ENCODE measurements at regions of chrX and their contacts with region 1.

Region 1: DNA sequence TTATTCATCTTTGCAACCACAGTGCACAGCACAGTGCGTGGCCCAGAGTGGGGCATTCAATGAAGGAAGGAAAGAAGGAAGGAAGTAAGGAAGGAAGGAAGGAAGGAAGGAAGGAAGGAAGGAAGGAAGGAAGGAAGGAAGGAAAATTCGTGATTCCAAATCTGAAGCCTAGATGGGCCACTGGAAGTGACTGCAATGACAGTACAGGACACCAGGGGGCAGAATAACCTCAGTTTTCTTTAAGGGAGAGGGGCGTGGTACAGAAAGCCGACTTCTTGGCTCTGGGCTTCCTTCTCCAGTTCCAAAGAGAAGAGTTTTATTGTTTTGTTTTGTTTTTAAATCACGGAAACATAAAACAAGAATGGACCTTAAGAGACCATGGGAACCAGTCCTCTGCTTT is 47.8 kb downstream of the APLN start:
- DNase-seq: peak; percentile 23
- ATAC-seq: 0 out of 2 replicates have a peak, but pooled peaks have one; percentile 32
- H3K4me3 ChIP-seq: no peak overlapping the region
- H3K27ac ChIP-seq: no peak overlapping the region
- H3K4me1 ChIP-seq: peaks cover 10 to 15% of the 10 kb centered on the region in 2 experiments; a peak in 2 of 4 replicates
- H3K27me3 ChIP-seq: no peaks in the 10 kb centered on the region
- CTCF ChIP-seq: peak; percentile 60 to 61 (median 60); a peak in 5 of 6 replicates
- POLR2A ChIP-seq: no peak
- RAD21 ChIP-seq: peak; percentile 78

Region 2: GRCh38 chrX:129360175-129360574 is 246.7 kb before region 1 on chrX:
- CTCF ChIA-PET with region 1: no interaction called
- POLR2A ChIA-PET with region 1: no interaction called
- RAD21 ChIA-PET with region 1: no interaction called
- intact Hi-C with region 1: no loop called
- DNase-seq: peak; percentile 33
- ATAC-seq: peak; percentile 82
- H3K4me3 ChIP-seq: no peak overlapping the region
- H3K27ac ChIP-seq: no peak overlapping the region
- H3K4me1 ChIP-seq: no peaks in the 10 kb centered on the region
- H3K27me3 ChIP-seq: no peaks in the 10 kb centered on the region
- CTCF ChIP-seq: peak; percentile 31 to 61 (median 36); a peak in 5 of 6 replicates
- POLR2A ChIP-seq: no peak
- RAD21 ChIP-seq: peak; percentile 63

Region 3: GRCh38 chrX:129726307-129727111 is 119.6 kb after region 1 on chrX:
- CTCF ChIA-PET with region 1: interaction called, 27 read pairs
- POLR2A ChIA-PET with region 1: no interaction called
- RAD21 ChIA-PET with region 1: interaction called in 1 of 2 experiments, 4 read pairs
- intact Hi-C with region 1: loop called (anchors 1 kb)
- DNase-seq: peak; percentile 28
- ATAC-seq: peak; percentile 91
- H3K4me3 ChIP-seq: no peak overlapping the region
- H3K27ac ChIP-seq: no peak overlapping the region
- H3K4me1 ChIP-seq: no peaks in the 10 kb centered on the region
- H3K27me3 ChIP-seq: no peaks in the 10 kb centered on the region
- CTCF ChIP-seq: peak; percentile 59 to 78 (median 65); a peak in 5 of 6 replicates
- POLR2A ChIP-seq: no peak
- RAD21 ChIP-seq: peak; percentile 86

Region 4: DNA sequence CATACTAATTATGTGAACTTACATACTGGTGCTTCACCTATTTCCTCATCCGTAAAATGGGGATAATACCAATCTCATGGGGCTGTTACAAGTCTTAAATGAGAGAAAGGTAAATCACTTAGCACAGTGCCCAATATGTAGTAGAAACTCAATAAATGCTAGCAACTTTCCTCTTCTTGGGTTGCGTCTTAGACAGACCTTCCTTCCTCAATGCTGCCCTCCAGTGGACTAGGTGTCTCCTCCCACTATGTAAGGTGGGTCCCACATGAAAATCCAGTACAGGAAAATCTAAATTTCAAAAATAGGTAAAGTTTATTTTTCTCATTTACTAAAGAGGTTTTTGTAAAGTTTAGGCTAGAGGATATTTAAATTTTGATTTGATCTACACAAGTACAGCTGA is 216.2 kb after region 1 on chrX:
- CTCF ChIA-PET with region 1: no interaction called
- POLR2A ChIA-PET with region 1: no interaction called
- RAD21 ChIA-PET with region 1: no interaction called
- intact Hi-C with region 1: loop called (anchors 2 kb)
- DNase-seq: no peak
- ATAC-seq: peak; percentile 78
- H3K4me3 ChIP-seq: no peak overlapping the region
- H3K27ac ChIP-seq: no peak overlapping the region
- H3K4me1 ChIP-seq: no peaks in the 10 kb centered on the region
- H3K27me3 ChIP-seq: no peaks in the 10 kb centered on the region
- CTCF ChIP-seq: peak; percentile 27 to 54 (median 53); a peak in 5 of 6 replicates
- POLR2A ChIP-seq: no peak
- RAD21 ChIP-seq: peak; percentile 30; the same call in 1 of the 2 replicates

Region 5: GRCh38 chrX:129905787-129906580 is 299.1 kb after region 1 on chrX and contains the start of gene UTP14A:
- CTCF ChIA-PET with region 1: no interaction called
- POLR2A ChIA-PET with region 1: no interaction called
- RAD21 ChIA-PET with region 1: no interaction called
- intact Hi-C with region 1: loop called (anchors 5 kb)
- DNase-seq: peak; percentile 86
- ATAC-seq: peak; percentile 92
- H3K4me3 ChIP-seq: peak within 1 kb of the TSS; percentile 77 to 78
- H3K27ac ChIP-seq: peak within 1 kb of the TSS; percentile 70
- H3K4me1 ChIP-seq: peaks cover 7 to 25% of the 10 kb centered on the region in 2 experiments; a peak in 3 of 4 replicates
- H3K27me3 ChIP-seq: no peaks in the 10 kb centered on the region
- CTCF ChIP-seq: no peak
- POLR2A ChIP-seq: peak; percentile 46
- RAD21 ChIP-seq: no peak
- total RNA-seq, gene UTP14A: 28.3 TPM

Region 6: GRCh38 chrX:130060122-130061069 is 453.5 kb after region 1 on chrX:
- CTCF ChIA-PET with region 1: interaction called, 8 read pairs
- POLR2A ChIA-PET with region 1: no interaction called
- RAD21 ChIA-PET with region 1: no interaction called
- intact Hi-C with region 1: loop called (anchors 5 kb)
- DNase-seq: peak; percentile 12
- ATAC-seq: peak; percentile 91
- H3K4me3 ChIP-seq: peak overlapping the region in 1 of 2 experiments; percentile 23; a peak in 2 of 4 replicates
- H3K27ac ChIP-seq: no peak overlapping the region; the same call in 1 of the 2 replicates
- H3K4me1 ChIP-seq: peaks cover 2 to 9% of the 10 kb centered on the region in 2 experiments; a peak in 3 of 4 replicates
- H3K27me3 ChIP-seq: no peaks in the 10 kb centered on the region
- CTCF ChIP-seq: peak; percentile 63 to 73 (median 64); a peak in 5 of 6 replicates
- POLR2A ChIP-seq: no peak
- RAD21 ChIP-seq: peak; percentile 85

Region 7: DNA sequence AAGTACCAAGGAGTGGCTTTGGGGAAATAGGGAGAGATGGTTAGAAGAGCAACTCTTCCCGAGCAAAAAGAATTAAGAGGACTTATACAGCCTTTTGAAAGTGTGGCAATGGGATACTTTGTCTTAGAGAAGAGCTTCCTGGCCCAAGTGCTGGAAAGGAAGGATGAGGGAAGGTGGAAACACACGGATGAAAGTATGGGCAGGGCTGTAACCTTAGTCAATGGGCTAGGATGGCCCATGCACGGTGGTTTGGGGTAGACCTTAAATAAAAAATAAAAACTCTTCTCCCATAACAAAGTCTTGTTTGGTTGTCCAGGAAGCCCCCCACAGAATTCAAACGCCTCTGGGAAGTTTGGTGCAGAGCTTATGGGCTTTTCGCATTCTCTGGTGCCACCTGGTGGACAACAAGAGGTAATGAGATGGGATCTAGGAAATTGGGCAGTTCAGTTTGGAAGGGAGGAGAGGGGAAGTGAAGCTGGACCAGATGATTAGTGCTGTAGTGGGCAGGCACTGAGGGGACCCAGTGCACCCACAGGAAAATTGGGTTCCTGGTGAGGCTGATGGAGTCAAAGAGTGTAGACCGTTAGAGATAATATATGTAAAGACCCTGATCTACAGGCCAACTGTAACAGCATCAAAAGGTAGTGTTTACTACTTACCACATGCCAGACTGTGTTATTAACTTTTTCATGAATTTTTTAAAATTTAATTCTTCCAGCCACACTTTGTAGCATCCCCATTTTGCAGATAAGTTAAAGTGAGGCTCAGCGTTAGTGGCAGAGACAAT is 1309.9 kb after region 1 on chrX:
- CTCF ChIA-PET with region 1: no interaction called
- POLR2A ChIA-PET with region 1: no interaction called
- RAD21 ChIA-PET with region 1: no interaction called
- intact Hi-C with region 1: loop called (anchors 10 kb)
- DNase-seq: peak; percentile 47
- ATAC-seq: peak; percentile 76
- H3K4me3 ChIP-seq: no peak overlapping the region
- H3K27ac ChIP-seq: no peak overlapping the region
- H3K4me1 ChIP-seq: no peaks in the 10 kb centered on the region
- H3K27me3 ChIP-seq: no peaks in the 10 kb centered on the region
- CTCF ChIP-seq: peak; percentile 58 to 70 (median 63); a peak in 5 of 6 replicates
- POLR2A ChIP-seq: no peak
- RAD21 ChIP-seq: peak; percentile 86

Measured in HCT116 (cell line).